ENCODE measurements at regions of chr19 and their contacts with region 1.

Region 1: DNA sequence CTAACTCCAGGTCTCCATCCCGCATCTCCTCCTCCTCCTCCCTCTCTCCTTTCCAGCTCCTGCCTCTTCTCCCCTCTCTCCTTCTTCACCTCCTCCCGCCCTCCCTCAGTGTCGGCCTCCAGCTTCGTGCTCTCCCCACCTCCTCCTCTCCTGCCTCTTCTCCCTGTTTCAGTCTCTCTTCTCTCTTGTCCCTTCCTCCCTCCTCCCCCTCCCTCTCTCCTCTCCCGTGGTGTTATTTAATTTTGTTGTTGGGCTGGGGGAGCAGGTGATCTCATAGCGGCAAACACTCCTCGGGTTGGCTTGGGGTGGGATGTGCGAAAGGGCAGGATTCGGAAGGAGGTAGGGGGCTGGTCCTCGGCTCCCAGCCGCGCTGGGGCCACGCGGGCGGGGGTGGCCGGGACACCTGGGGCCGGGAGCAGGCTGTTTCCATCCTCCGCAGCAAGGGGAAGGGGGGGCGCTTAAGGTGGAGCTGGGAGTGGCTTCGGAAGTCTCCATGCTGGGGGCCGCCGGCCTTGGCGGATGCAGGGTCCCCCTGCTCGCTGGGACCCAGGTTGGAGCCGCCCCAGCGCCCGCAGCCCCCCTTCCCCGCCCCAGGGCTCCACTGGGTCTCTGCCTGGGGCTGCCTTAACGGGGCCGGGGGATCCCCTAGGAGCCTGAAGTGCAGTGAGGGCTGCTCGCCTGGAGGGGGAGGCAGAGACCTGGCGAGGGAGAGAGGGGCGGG is at the start of gene CA11:
- DNase-seq: peak; percentile 70
- ATAC-seq: peak; percentile 92
- H3K4me3 ChIP-seq: peak within 1 kb of the TSS; percentile 52 to 69 (median 59)
- H3K27ac ChIP-seq: no peak within 1 kb of the TSS
- H3K4me1 ChIP-seq: peaks cover 18% of the 10 kb centered on the region
- H3K27me3 ChIP-seq: peaks cover 0 to 1% of the 10 kb centered on the region in 2 experiments; a peak in 2 of 5 replicates
- CTCF ChIP-seq: peak; percentile 98
- EP300 ChIP-seq: no peak
- POLR2A ChIP-seq: no peak
- RAD21 ChIP-seq: peak; percentile 88
- total RNA-seq, gene CA11: 0.24 and 0.58 TPM in 2 replicates

Region 2: DNA sequence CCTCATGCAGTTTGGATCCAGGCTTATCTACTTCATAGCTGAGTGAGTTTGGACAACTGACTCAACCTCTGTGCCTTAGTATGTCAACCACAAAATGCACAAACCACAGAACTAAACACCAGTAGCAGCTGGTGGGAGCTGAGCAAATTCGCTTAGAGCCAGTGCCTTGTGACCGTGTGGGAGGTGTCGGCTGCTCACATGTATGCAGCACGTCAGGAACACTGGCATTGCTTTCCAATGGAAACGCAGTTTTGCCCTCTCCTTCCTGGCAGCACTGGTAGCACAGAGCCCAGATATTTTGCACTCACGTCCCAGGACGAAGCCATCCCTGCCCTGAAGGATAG is 34.9 kb after region 1 on chr19:
- CTCF ChIA-PET with region 1: interaction called, 7 read pairs
- POLR2A ChIA-PET with region 1: no interaction called
- in situ Hi-C with region 1: no loop called
- intact Hi-C with region 1: loop called (anchors 2 kb)
- DNase-seq: no peak
- ATAC-seq: peak; percentile 44
- H3K4me3 ChIP-seq: no peak overlapping the region
- H3K27ac ChIP-seq: no peak overlapping the region
- H3K4me1 ChIP-seq: peaks cover 50% of the 10 kb centered on the region
- H3K27me3 ChIP-seq: 0 out of 5 replicates have a peak, but pooled peaks cover 0 to 3% of the 10 kb centered on the region in 2 experiments
- CTCF ChIP-seq: no peak
- EP300 ChIP-seq: no peak
- POLR2A ChIP-seq: no peak
- RAD21 ChIP-seq: no peak

Region 3: DNA sequence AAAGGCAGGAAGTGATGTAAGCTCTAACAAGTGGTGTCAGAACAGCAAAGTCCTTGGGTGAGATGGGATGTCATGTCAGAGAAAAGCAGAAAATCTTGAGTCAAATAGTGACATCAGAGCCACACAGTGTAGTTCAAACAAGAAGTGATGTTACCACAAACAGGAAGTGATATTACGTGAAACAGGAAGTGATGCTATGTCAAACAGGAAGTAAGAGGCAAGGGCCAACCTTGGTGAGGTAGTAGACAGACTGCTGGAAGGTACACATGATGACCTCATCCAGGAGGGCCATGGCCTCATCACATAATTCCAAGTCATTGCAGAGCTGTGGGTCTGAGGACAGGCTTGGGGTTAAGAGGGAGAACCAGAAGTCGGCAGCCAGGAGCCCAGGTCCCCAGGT is 80.4 kb after region 1 on chr19:
- CTCF ChIA-PET with region 1: no interaction called
- POLR2A ChIA-PET with region 1: no interaction called
- in situ Hi-C with region 1: no loop called
- intact Hi-C with region 1: no loop called
- DNase-seq: no peak
- ATAC-seq: no peak
- H3K4me3 ChIP-seq: no peak overlapping the region
- H3K27ac ChIP-seq: no peak overlapping the region
- H3K4me1 ChIP-seq: peaks cover 15% of the 10 kb centered on the region
- H3K27me3 ChIP-seq: no peaks in the 10 kb centered on the region
- CTCF ChIP-seq: no peak
- EP300 ChIP-seq: no peak
- POLR2A ChIP-seq: no peak
- RAD21 ChIP-seq: no peak

Region 4: DNA sequence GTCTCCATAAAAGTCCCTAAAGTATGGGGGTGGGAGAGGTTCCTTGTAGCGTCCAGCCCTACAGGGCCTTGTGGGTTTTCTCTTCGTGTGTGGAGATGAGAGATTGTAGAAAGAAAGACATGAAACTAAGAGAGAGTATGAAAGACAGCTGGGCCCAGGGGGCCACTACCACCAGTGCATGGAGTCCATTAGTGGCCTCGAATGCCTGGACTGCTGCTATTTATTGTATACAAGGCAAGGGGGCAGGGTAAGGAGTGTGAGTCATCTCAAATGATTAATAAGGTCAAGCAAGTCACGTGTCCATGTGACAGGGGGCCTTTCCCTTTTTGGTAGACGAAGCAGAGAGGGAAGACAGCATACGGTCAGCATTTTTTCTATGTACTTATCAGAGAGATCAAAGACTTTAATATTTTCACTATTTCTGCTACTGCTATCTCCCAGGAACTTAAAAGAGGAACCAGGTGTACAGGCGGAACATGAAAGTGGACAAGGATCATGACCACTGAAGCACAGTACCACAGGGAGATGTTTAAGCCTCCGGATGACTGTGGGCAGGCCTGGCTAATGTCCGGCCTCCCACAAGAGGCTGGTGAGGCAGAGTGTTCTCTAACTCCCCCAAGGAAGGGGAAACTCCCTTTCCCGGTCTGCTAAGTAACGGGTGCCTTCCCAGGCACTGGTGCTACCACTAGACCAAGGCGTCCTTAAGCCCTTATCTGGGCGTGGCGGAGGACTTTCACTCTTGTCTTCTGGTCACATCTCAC is 134.7 kb after region 1 on chr19:
- CTCF ChIA-PET with region 1: no interaction called
- POLR2A ChIA-PET with region 1: no interaction called
- in situ Hi-C with region 1: loop called (anchors 5 kb)
- intact Hi-C with region 1: no loop called
- DNase-seq: peak; percentile 88
- ATAC-seq: peak; percentile 56
- H3K4me3 ChIP-seq: peak overlapping the region in 1 of 3 experiments; percentile 55; a peak in 2 of 6 replicates
- H3K27ac ChIP-seq: no peak overlapping the region
- H3K4me1 ChIP-seq: peaks cover 54% of the 10 kb centered on the region
- H3K27me3 ChIP-seq: no peaks in the 10 kb centered on the region; a peak in 1 of 5 replicates
- CTCF ChIP-seq: no peak
- EP300 ChIP-seq: peak in 1 of 2 experiments; percentile 15; a peak in 1 of 4 replicates
- POLR2A ChIP-seq: no peak
- RAD21 ChIP-seq: no peak

Region 5: GRCh38 chr19:48842789-48843162 is 196.6 kb after region 1 on chr19:
- CTCF ChIA-PET with region 1: no interaction called
- POLR2A ChIA-PET with region 1: no interaction called
- in situ Hi-C with region 1: loop called (anchors 5 kb)
- intact Hi-C with region 1: no loop called
- DNase-seq: peak; percentile 58
- ATAC-seq: peak; percentile 64
- H3K4me3 ChIP-seq: no peak overlapping the region
- H3K27ac ChIP-seq: no peak overlapping the region
- H3K4me1 ChIP-seq: peaks cover 6% of the 10 kb centered on the region
- H3K27me3 ChIP-seq: no peaks in the 10 kb centered on the region
- CTCF ChIP-seq: peak; percentile 85
- EP300 ChIP-seq: no peak
- POLR2A ChIP-seq: no peak
- RAD21 ChIP-seq: peak; percentile 56; the same call in 1 of the 2 replicates